Activated T-helper 2 cell treated with anti-CD3 and anti-CD28 coated beads, Interferon-gamma antibody, Interleukin-2, Interleukin-4, amounts not matched to agents 10 μg/mL and 5 μg/mL and 100 μg/mL, durations not matched to agents 14 hours and 24 hours and 36 hours (primary cell): ENCODE measurements at regions of chr14 and their contacts with region 1.

Region 1: DNA sequence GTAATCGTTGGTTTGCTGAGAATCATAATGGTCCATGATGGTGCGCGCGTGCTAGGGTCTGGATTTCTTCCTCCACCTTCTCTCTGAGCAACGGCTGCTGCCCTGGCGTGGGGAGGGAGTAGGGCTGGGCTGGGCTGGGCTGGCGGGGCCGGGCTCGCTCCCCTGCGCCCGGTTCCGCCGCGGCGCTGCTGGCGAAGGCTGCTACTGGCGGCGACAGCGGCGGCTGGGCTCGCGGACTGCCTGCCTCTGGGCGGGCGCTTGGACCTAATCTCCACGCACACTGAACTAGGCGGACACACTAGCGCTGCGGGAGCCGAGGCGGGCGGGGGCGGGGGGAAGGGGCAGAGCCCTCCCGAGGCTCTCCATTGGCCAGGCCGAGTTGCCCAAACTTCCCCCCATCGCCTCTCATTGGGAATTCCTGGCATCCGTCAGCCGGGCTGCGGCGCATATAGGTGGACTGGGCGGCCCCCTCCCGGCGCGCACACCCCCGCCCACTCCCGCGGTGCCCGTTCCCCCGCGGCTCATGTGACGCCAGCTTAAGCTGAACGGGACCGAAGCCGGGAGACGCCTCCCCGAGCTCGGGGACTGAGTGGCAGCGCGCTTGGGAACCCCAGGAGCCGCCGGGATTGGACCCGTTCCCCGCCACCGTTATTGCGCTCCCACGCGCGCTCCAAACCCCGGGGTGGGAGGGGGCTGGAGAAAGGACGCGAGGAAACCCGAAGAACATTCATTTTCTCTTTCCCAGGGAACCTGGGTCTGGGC is at the start of gene ACTN1:
- DNase-seq: peak; percentile 49
- H3K4me3 Mint-ChIP-seq: peak within 1 kb of the TSS; percentile 86
- H3K27ac Mint-ChIP-seq: peak within 1 kb of the TSS; percentile 82
- H3K4me1 Mint-ChIP-seq: peaks cover 24% of the 10 kb centered on the region
- H3K27me3 Mint-ChIP-seq: peaks cover 21% of the 10 kb centered on the region
- total RNA-seq, gene ACTN1: 133 and 134 TPM in 2 replicates

Region 2: GRCh38 chr14:68703093-68703492 is 276.1 kb before region 1 on chr14:
- intact Hi-C with region 1: no loop called
- DNase-seq: no peak
- H3K4me3 Mint-ChIP-seq: no peak overlapping the region
- H3K27ac Mint-ChIP-seq: no peak overlapping the region
- H3K4me1 Mint-ChIP-seq: peaks cover 10% of the 10 kb centered on the region
- H3K27me3 Mint-ChIP-seq: no peaks in the 10 kb centered on the region

Region 3: DNA sequence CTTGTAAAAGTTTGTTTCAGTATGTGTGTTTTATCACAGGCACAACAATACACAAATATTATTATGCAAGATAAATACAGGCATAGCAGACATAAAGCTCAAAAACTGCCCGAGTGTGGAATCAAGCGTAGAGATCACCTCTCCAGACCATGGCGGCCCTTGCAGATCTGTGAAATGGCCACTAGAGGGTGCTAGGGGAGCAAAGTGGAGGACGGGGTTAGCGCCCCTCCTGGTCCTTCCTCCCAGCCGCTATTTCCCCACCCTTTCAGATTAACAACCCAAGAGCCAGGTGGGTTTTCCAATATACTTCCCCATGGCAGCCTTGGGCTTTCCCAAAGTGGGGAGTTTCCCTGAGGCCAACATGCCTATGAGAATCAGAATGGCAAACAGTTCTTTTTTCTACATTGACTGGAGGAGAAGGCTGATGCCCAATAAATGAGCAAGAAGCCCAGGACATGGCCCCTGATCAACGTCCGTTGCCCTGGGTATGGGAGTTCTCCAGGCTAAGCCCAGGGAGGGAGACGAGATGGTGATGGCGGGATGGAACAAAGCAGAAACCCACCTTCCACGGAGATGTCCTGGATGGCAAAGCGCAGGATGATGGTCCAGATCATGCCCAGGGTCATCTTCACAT is 67.5 kb before region 1 on chr14:
- intact Hi-C with region 1: loop called (anchors 5 kb)
- DNase-seq: peak; percentile 60
- H3K4me3 Mint-ChIP-seq: no peak overlapping the region
- H3K27ac Mint-ChIP-seq: no peak overlapping the region
- H3K4me1 Mint-ChIP-seq: peaks cover 19% of the 10 kb centered on the region
- H3K27me3 Mint-ChIP-seq: no peaks in the 10 kb centered on the region

Region 4: GRCh38 chr14:69055999-69056788 is 77.0 kb after region 1 on chr14:
- intact Hi-C with region 1: loop called (anchors 5 kb)
- DNase-seq: no peak
- H3K4me3 Mint-ChIP-seq: no peak overlapping the region
- H3K27ac Mint-ChIP-seq: no peak overlapping the region
- H3K4me1 Mint-ChIP-seq: peaks cover 11% of the 10 kb centered on the region
- H3K27me3 Mint-ChIP-seq: no peaks in the 10 kb centered on the region

Region 5: GRCh38 chr14:69153131-69153872 is 174.1 kb after region 1 on chr14:
- intact Hi-C with region 1: loop called (anchors 2 kb)
- DNase-seq: peak; percentile 93
- H3K4me3 Mint-ChIP-seq: peak overlapping the region; percentile 91
- H3K27ac Mint-ChIP-seq: peak overlapping the region; percentile 92
- H3K4me1 Mint-ChIP-seq: peaks cover 28% of the 10 kb centered on the region
- H3K27me3 Mint-ChIP-seq: peaks cover 35% of the 10 kb centered on the region